Heart left ventricle (tissue), 16 donors: ENCODE measurements at regions of chr21 and their contacts with region 1.

Region 1: DNA sequence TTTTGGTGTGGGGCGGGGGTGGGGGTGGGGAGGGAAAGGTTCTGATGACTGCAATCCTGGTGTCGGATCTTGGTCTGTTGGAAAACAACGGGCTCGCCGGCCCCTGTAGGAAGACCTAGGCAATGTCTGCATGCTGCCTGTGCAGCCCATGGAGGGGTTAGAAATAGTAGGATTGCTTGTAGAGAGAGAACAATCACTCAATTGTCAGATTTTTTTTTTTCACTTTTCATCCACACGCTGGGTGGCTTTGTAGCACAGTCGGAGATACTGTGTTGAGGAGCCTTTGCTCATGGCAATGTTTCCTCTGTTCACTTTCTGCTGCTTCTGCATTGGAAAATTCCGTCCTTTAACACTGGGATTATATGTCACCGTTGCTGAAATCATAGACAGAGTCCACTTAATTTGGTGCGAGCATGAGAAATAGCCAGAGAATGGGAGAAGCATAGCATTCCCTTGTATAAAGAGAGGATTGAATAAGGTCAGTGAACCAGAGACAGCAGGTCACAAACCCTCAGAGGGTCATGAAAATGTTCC is 107.5 kb downstream of the MRPS6 start:
- DNase-seq: no peak
- ATAC-seq: peak in 1 of 4 donors; percentile 42
- H3K4me3 ChIP-seq: peak overlapping the region in 7 of 12 donors; percentile 18 to 42 (median 31)
- H3K27ac ChIP-seq: peak overlapping the region in 10 of 12 donors; percentile 8 to 53 (median 25)
- H3K4me1 ChIP-seq: peaks cover 0 to 5% (median 0%) of the 10 kb centered on the region in 12 donors
- H3K27me3 ChIP-seq: no peaks in the 10 kb centered on the region
- CTCF ChIP-seq: no peak
- POLR2A ChIP-seq: no peak

Region 2: GRCh38 chr21:34143685-34144182 is 37.2 kb before region 1 on chr21:
- intact Hi-C with region 1: loop called in 1 of 10 experiments (anchors 5 kb)
- DNase-seq: no peak
- ATAC-seq: no peak
- H3K4me3 ChIP-seq: no peak overlapping the region
- H3K27ac ChIP-seq: no peak overlapping the region
- H3K4me1 ChIP-seq: peaks cover 0 to 30% (median 5%) of the 10 kb centered on the region in 12 donors
- H3K27me3 ChIP-seq: no peaks in the 10 kb centered on the region
- CTCF ChIP-seq: no peak
- POLR2A ChIP-seq: no peak

Region 3: GRCh38 chr21:34202553-34203372 is 21.9 kb after region 1 on chr21:
- intact Hi-C with region 1: no loop called
- DNase-seq: peak in 1 of 5 donors; percentile 26
- ATAC-seq: no peak
- H3K4me3 ChIP-seq: peak overlapping the region in 4 of 12 donors; percentile 5 to 56 (median 30)
- H3K27ac ChIP-seq: peak overlapping the region in 2 of 12 donors; percentile 37 to 79
- H3K4me1 ChIP-seq: peaks cover 0 to 63% (median 14%) of the 10 kb centered on the region in 12 donors
- H3K27me3 ChIP-seq: no peaks in the 10 kb centered on the region
- CTCF ChIP-seq: no peak
- POLR2A ChIP-seq: no peak

Region 4: GRCh38 chr21:36156339-36156814 is 1975.5 kb after region 1 on chr21:
- intact Hi-C with region 1: no loop called
- DNase-seq: peak; percentile 99 to 100 (median 100)
- ATAC-seq: peak; percentile 95 to 98 (median 96)
- H3K4me3 ChIP-seq: peak overlapping the region; percentile 87 to 99 (median 96)
- H3K27ac ChIP-seq: peak overlapping the region; percentile 71 to 94 (median 90)
- H3K4me1 ChIP-seq: peaks cover 0 to 34% (median 13%) of the 10 kb centered on the region in 12 donors
- H3K27me3 ChIP-seq: no peaks in the 10 kb centered on the region
- CTCF ChIP-seq: no peak
- POLR2A ChIP-seq: no peak